MCF 10A (cell line): ENCODE measurements at regions of chr17 and their contacts with region 1.

Region 1: DNA sequence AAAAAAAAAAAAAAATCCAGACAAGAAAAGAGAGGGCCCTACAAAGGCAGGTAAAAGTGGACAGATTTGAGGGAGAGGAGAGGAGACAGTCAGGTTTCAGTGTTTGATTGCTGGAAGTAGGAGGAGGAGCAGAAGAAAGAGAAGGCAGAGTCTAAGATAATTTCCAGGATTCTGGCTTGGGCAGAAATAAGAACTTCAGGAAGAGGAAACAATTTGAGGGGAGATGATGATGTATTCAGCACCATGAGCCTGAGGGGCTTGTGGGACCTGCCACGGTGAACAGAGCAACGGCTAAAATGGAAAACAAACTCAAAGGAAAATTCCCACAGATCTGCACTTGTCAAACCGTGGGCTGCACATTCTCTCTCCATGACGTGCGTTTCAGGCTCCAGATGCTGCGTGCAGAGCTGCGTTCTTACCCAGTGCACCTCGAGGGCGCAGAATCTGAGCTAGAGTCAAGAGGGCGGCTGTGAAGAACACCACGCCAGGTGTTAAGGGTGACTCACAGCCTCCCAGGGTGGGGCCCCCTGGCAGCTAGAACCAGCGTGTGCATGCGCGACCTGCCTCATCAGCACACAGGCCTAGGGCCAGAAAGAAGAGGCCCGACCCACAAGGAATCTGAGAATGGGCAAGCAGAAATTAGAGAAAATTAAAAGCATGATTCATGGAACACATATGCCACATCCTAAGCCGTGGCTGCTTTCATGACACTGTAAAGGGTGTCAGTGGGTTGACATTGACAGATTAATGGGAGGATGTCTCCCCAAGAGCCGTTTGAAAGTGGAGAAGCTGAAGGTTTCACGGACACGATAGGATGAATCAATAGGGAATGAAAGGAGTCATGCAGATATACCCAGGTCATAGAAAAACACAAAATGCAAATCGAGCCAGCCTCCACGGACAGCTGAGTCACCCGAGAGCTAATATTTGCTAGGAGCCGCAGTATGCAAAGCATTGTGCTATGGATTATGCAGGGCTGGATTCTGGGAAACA is 29.1 kb downstream of the MARCHF10 start:
- DNase-seq: peak; percentile 96
- H3K4me3 Mint-ChIP-seq: peak overlapping the region; percentile 70
- H3K27ac Mint-ChIP-seq: peak overlapping the region; percentile 92
- H3K4me1 Mint-ChIP-seq: peaks cover 34% of the 10 kb centered on the region
- H3K27me3 Mint-ChIP-seq: no peaks in the 10 kb centered on the region
- CTCF ChIP-seq: no peak

Region 2: DNA sequence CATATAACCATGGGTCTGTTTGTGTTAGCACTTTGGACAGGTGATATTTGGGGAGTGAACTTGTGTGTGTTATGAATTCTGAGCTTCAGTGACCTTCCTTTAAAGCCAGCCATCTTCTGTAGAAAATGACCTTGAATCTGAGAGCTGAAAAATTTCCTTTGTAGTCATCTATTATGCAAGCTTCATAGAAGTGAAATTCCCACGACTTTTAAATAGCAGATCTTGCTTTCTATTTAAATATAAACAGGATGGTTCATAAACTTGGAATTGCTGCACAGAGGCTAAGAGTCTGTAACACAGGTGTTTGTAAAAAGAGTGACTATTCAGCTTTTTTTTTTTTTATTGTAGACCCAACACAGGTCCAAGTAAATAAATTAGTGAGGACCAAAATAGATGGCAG is 56.4 kb before region 1 on chr17:
- CTCF ChIA-PET with region 1: no interaction called
- POLR2A ChIA-PET with region 1: interaction called, 10 read pairs
- intact Hi-C with region 1: no loop called
- DNase-seq: no peak
- H3K4me3 Mint-ChIP-seq: no peak overlapping the region
- H3K27ac Mint-ChIP-seq: no peak overlapping the region
- H3K4me1 Mint-ChIP-seq: peaks cover 47% of the 10 kb centered on the region
- H3K27me3 Mint-ChIP-seq: no peaks in the 10 kb centered on the region
- CTCF ChIP-seq: no peak

Region 3: GRCh38 chr17:62761917-62762316 is 17.1 kb before region 1 on chr17:
- CTCF ChIA-PET with region 1: interaction called, 4 read pairs
- POLR2A ChIA-PET with region 1: interaction called, 13 read pairs
- intact Hi-C with region 1: no loop called
- DNase-seq: peak; percentile 76
- H3K4me3 Mint-ChIP-seq: no peak overlapping the region
- H3K27ac Mint-ChIP-seq: no peak overlapping the region
- H3K4me1 Mint-ChIP-seq: peaks cover 6% of the 10 kb centered on the region
- H3K27me3 Mint-ChIP-seq: no peaks in the 10 kb centered on the region
- CTCF ChIP-seq: no peak

Region 4: GRCh38 chr17:62819475-62820212 is 40.7 kb after region 1 on chr17:
- CTCF ChIA-PET with region 1: interaction called, 5 read pairs
- POLR2A ChIA-PET with region 1: interaction called, 26 read pairs
- intact Hi-C with region 1: loop called (anchors 1 kb)
- DNase-seq: peak; percentile 95
- H3K4me3 Mint-ChIP-seq: peak overlapping the region; percentile 50
- H3K27ac Mint-ChIP-seq: peak overlapping the region; percentile 91
- H3K4me1 Mint-ChIP-seq: peaks cover 34% of the 10 kb centered on the region
- H3K27me3 Mint-ChIP-seq: no peaks in the 10 kb centered on the region
- CTCF ChIP-seq: no peak

Region 5: GRCh38 chr17:62860907-62861848 is 82.2 kb after region 1 on chr17:
- CTCF ChIA-PET with region 1: no interaction called
- POLR2A ChIA-PET with region 1: no interaction called
- intact Hi-C with region 1: no loop called
- DNase-seq: no peak
- H3K4me3 Mint-ChIP-seq: no peak overlapping the region
- H3K27ac Mint-ChIP-seq: no peak overlapping the region
- H3K4me1 Mint-ChIP-seq: no peaks in the 10 kb centered on the region
- H3K27me3 Mint-ChIP-seq: no peaks in the 10 kb centered on the region
- CTCF ChIP-seq: no peak

Region 6: DNA sequence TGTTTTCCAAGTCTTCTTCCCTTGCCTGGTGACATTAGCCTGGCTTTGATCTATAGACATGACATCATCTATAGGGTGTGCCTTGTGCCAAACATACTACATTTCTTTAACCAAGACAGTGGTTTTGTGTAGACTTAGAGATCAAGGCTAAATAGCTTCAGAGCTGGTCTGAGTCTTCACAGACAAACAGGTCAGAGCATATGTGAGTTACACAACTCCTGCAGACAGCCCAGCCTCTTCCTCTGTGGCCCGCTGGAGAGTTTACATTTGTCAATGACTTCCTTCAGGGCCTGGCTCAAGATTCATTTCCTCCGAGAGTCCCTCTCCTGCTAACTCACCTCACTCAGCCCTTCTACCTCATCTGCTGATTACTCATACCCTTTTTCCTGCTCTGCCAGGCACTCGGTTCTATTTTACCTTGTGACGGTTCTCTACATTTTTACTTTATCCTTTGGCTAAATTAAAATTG is 113.9 kb after region 1 on chr17:
- CTCF ChIA-PET with region 1: interaction called, 3 read pairs
- POLR2A ChIA-PET with region 1: interaction called, 9 read pairs
- intact Hi-C with region 1: loop called (anchors 5 kb)
- DNase-seq: peak; percentile 96
- H3K4me3 Mint-ChIP-seq: peak overlapping the region; percentile 44
- H3K27ac Mint-ChIP-seq: peak overlapping the region; percentile 81
- H3K4me1 Mint-ChIP-seq: peaks cover 17% of the 10 kb centered on the region
- H3K27me3 Mint-ChIP-seq: no peaks in the 10 kb centered on the region
- CTCF ChIP-seq: no peak